Esophagus muscularis mucosa (tissue), 4 donors: ENCODE measurements at regions of chr22 and their contacts with region 1.

Region 1: DNA sequence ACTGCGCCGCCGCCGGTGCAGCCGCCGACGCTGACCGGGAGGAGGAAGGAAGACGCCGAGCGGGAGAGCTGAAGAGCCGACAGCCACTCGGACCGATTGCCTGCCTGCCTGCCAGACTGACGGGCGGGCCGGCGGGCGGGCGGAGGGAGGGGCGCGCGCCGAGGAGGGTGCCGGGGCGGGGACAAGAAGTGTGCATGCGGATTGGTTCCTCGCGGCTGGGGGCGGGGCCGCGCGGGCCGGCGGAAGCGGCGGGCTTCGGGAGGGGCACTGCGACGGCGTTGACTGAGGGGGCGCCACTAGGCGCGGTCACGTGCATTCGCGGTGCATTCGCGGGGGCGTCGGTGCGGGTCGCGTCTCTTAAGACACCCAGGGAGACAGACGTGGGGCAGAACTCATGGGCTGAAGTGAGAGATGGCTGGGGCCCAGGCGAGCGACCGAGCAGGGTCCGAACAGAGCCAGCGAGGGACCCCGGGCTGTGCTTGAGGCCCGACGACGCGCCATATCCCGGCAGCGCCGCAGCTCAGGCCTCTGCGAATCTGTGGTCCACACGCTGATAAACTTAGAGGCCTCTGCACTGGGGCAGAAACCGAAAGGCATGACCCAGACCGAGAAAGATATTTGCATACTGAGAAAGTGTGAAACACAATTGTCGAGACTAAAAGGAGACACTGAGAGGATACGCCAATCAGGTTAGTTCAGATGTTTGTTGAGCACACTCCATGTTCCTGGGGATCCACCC is at the start of gene MAPK1:
- DNase-seq: peak; percentile 98
- H3K4me3 ChIP-seq: peak within 1 kb of the TSS; percentile 72 to 97 (median 94)
- H3K27ac ChIP-seq: peak within 1 kb of the TSS; percentile 89 to 95 (median 90)
- H3K4me1 ChIP-seq: peaks cover 30 to 51% (median 46%) of the 10 kb centered on the region in 4 donors
- H3K27me3 ChIP-seq: no peaks in the 10 kb centered on the region
- CTCF ChIP-seq: peak; percentile 33 to 41 (median 38)
- EP300 ChIP-seq: no peak
- POLR2A ChIP-seq: peak; percentile 73
- total RNA-seq, gene MAPK1: 44.9 to 87.2 (median 63.5) TPM

Region 2: GRCh38 chr22:21735200-21736076 is 132.3 kb before region 1 on chr22 and contains the start of gene YPEL1:
- intact Hi-C with region 1: loop called (anchors 10 kb)
- DNase-seq: peak; percentile 98
- H3K4me3 ChIP-seq: peak within 1 kb of the TSS; percentile 67 to 80 (median 70)
- H3K27ac ChIP-seq: peak within 1 kb of the TSS; percentile 76 to 93 (median 84)
- H3K4me1 ChIP-seq: peaks cover 8 to 21% (median 17%) of the 10 kb centered on the region in 4 donors
- H3K27me3 ChIP-seq: no peaks in the 10 kb centered on the region
- CTCF ChIP-seq: no peak
- EP300 ChIP-seq: no peak
- POLR2A ChIP-seq: no peak
- total RNA-seq, gene YPEL1: 12.0 to 30.7 (median 16.5) TPM

Region 3: GRCh38 chr22:21807544-21808529 is 59.9 kb before region 1 on chr22:
- intact Hi-C with region 1: loop called (anchors 5 kb)
- DNase-seq: no peak
- H3K4me3 ChIP-seq: no peak overlapping the region
- H3K27ac ChIP-seq: no peak overlapping the region
- H3K4me1 ChIP-seq: peaks cover 8 to 34% (median 27%) of the 10 kb centered on the region in 4 donors
- H3K27me3 ChIP-seq: no peaks in the 10 kb centered on the region
- CTCF ChIP-seq: no peak
- EP300 ChIP-seq: no peak
- POLR2A ChIP-seq: no peak

Region 4: GRCh38 chr22:21839765-21840140 is 27.9 kb before region 1 on chr22:
- intact Hi-C with region 1: loop called (anchors 2 kb)
- DNase-seq: no peak
- H3K4me3 ChIP-seq: no peak overlapping the region
- H3K27ac ChIP-seq: no peak overlapping the region
- H3K4me1 ChIP-seq: peaks cover 33 to 69% (median 62%) of the 10 kb centered on the region in 4 donors
- H3K27me3 ChIP-seq: no peaks in the 10 kb centered on the region
- CTCF ChIP-seq: no peak
- EP300 ChIP-seq: no peak
- POLR2A ChIP-seq: no peak

Region 5: DNA sequence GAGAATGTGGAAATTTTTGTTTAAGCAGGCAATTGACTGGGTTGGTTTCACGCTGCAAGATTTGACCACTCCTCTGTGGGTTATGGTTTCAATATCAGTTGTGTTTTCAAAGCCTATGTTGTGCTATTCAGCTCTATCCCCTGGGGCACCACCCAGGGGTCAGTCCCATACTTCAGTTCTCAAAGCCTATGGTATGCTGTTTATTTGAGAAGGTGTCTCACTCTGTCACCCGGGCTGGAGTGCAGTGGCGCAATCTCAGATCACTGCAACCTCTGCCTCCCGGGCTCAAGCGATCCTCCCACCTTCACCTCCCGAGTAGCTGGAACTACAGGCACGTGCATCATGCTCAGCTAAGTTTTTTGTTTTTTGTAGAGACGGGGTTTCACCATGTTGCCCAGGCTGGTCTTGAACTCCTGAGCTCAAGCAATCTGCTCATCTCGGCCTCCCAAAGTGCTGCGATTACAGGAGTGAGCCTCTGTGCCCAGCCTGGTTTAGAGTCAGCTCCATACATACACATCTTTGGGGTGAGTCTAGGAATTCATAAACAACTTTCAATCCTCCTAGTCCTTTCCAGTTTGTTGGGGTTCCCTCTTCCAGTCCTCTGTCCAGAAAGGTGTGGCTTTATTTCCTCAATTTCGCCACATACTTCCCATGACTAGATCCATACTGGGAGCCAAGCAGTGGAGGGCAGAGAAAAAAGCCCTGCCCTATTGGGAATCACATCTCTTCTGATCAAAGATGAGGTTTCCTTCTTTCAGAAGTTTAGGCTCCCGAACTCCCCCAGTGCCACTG is 34.8 kb after region 1 on chr22:
- intact Hi-C with region 1: no loop called
- DNase-seq: no peak
- H3K4me3 ChIP-seq: no peak overlapping the region
- H3K27ac ChIP-seq: no peak overlapping the region
- H3K4me1 ChIP-seq: no peaks in the 10 kb centered on the region
- H3K27me3 ChIP-seq: no peaks in the 10 kb centered on the region
- CTCF ChIP-seq: no peak
- EP300 ChIP-seq: no peak
- POLR2A ChIP-seq: no peak

Region 6: GRCh38 chr22:21938071-21938822 is 70.5 kb after region 1 on chr22:
- intact Hi-C with region 1: loop called (anchors 5 kb)
- DNase-seq: peak; percentile 98
- H3K4me3 ChIP-seq: peak overlapping the region; percentile 61 to 67 (median 66)
- H3K27ac ChIP-seq: peak overlapping the region; percentile 92 to 98 (median 94)
- H3K4me1 ChIP-seq: peaks cover 71 to 94% (median 79%) of the 10 kb centered on the region in 4 donors
- H3K27me3 ChIP-seq: no peaks in the 10 kb centered on the region
- CTCF ChIP-seq: peak; percentile 88 to 99 (median 99)
- EP300 ChIP-seq: no peak
- POLR2A ChIP-seq: no peak